H1 (cell line): ENCODE measurements at regions of chr4 and their contacts with region 1.

Region 1: DNA sequence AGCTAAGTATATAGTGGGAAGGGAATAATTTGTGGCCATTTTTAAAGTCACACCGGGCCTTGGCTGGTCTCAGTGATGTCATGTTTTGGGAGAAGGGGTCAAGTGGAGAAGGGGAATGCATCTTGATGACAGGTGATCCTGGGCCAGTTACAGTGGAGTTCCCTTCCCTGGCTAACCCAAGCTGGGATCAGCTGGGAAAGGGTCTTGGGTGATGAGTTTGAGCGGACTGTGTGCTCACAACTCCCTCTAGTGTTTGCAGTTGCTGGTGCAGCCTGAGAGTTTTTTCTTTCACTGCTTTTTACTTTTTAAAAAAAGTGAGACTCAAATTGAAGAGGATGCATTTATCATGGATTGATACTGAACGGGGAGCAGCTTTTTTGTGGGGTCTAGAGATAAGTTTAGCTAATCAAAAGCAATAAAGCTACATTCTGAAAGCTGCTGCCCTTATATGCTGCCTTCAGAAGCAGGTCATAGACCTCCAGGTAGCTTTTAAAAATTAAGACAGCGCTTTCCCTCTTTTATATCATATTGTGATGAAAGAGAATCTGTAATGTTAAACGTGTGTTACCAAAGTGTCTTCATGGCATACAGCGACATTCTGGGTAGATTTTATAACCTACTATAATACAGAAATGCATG is 164.7 kb downstream of the DCLK2 start:
- DNase-seq: no peak
- H3K4me3 ChIP-seq: no peak overlapping the region
- H3K27ac ChIP-seq: no peak overlapping the region
- H3K4me1 ChIP-seq: peaks cover 0 to 2% (median 0%) of the 10 kb centered on the region in 4 experiments; a peak in 1 of 7 replicates
- H3K27me3 ChIP-seq: no peaks in the 10 kb centered on the region
- CTCF ChIP-seq: peak; percentile 73 to 91 (median 83)
- EP300 ChIP-seq: no peak
- POLR2A ChIP-seq: no peak
- RAD21 ChIP-seq: peak; percentile 90

Region 2: DNA sequence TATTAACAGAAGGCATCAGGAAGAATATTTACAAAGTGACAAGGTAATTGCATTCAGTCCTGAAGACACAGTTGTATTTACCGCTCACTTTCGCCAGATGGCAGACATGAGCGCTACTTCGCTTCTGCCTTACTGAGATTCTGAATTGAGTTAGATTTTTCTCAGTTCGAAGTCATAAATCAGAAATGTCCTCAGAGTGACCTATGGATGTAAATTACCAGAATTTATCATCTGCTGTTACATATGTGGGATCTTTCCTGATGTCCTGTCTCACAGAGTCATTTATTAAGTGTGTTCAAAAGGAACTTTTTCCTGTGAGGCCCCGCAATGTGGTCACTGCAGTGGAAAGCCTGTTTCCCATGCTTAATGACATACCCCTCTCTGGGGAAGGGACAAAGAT is 262.0 kb before region 1 on chr4:
- CTCF ChIA-PET with region 1: interaction called, 14 read pairs
- POLR2A ChIA-PET with region 1: no interaction called
- DNase-seq: peak; percentile 13 to 64
- H3K4me3 ChIP-seq: no peak overlapping the region
- H3K27ac ChIP-seq: no peak overlapping the region
- H3K4me1 ChIP-seq: no peaks in the 10 kb centered on the region
- H3K27me3 ChIP-seq: no peaks in the 10 kb centered on the region
- CTCF ChIP-seq: peak; percentile 2 to 82 (median 61)
- EP300 ChIP-seq: no peak
- POLR2A ChIP-seq: no peak
- RAD21 ChIP-seq: peak; percentile 71 to 77

Region 3: DNA sequence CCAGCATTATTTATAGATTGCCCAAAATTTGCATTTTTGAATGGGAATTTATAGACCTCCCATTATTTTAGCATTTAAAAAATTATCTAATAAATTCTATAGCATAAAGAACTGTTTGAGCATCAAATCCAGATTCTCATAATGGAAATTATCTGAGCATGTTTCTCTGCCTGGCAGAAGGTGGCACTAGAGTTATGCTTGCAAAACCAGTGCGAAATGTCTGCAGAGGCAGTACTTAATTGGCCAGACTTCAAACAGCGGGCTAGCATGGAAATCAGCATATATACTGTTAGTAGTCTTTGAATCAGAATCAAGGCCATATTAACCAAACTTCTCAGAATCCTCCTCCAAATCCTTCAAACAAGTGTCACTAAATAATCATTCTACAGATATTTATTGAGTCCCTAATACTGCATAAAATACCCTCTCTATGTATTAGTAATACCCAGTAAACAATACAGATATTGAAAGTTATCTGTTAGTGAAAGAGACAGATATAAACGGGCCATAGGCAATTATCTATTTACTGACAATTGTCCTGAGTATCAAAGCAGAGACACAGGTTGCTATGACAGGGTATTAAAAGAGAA is 243.4 kb before region 1 on chr4:
- CTCF ChIA-PET with region 1: interaction called, 25 read pairs
- POLR2A ChIA-PET with region 1: no interaction called
- DNase-seq: no peak
- H3K4me3 ChIP-seq: no peak overlapping the region
- H3K27ac ChIP-seq: no peak overlapping the region
- H3K4me1 ChIP-seq: no peaks in the 10 kb centered on the region
- H3K27me3 ChIP-seq: no peaks in the 10 kb centered on the region
- CTCF ChIP-seq: peak in 2 of 3 experiments; percentile 71 to 74; a peak in 3 of 4 replicates
- EP300 ChIP-seq: no peak
- POLR2A ChIP-seq: no peak
- RAD21 ChIP-seq: peak; percentile 91

Region 4: DNA sequence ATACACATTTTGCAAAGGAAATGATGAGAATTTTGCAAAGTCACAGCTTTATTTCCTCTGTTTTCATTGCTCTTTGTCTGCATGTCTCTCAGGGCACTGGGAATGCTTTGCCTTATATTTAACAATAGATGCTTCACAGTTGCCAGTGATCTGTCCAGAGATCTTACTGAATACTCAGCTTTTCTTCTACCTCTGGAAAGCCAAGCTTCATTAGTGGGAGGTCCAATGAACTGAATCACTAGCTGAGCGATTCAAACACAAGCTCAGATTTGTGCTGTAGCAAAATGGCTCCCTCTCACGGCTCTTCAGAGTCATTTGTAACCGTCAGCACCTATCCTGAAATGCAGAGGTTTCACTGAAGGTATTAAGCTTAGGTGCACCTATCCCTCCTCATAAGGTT is 25.7 kb before region 1 on chr4:
- CTCF ChIA-PET with region 1: interaction called, 20 read pairs
- POLR2A ChIA-PET with region 1: no interaction called
- DNase-seq: no peak
- H3K4me3 ChIP-seq: no peak overlapping the region
- H3K27ac ChIP-seq: no peak overlapping the region
- H3K4me1 ChIP-seq: peaks cover 0 to 7% (median 0%) of the 10 kb centered on the region in 4 experiments; a peak in 4 of 7 replicates
- H3K27me3 ChIP-seq: no peaks in the 10 kb centered on the region; a peak in 1 of 7 replicates
- CTCF ChIP-seq: peak in 2 of 3 experiments; percentile 25 to 26; a peak in 2 of 4 replicates
- EP300 ChIP-seq: no peak
- POLR2A ChIP-seq: no peak
- RAD21 ChIP-seq: peak; percentile 49 to 57

Region 5: DNA sequence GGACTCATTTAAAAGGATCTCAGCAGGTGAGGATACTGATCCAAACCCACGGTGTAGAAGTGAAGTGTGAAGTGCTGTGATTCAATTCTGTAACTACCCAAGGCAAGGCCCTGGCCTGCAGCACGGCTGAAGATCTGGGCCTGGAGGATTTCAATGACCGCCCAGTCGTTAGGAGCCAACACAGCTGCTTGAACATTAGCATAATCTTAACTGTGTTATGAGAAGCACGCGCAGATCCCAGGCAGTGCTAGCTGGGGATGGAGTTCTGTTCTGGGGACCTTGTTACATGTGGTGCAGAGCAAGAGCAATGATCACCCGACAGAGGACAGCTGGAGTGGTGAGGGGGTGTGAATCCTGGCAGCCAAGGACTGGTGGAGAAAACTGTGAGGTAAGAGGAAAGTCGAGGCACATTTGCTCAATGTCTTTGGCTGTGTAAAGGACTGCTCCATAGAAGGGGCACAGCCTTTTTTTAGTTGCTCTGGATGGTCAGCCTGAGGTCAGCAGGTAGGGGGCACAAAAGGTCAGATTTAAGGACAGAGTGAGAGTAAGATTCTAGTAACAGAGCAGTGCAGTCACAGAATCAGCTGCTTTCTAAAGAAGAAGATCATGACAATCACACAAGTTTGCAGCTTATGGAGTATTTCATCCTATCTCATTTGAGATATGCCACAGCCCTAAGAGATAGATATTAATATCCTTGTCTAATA is 17.1 kb after region 1 on chr4:
- CTCF ChIA-PET with region 1: interaction called, 34 read pairs
- POLR2A ChIA-PET with region 1: interaction called, 3 read pairs
- DNase-seq: no peak
- H3K4me3 ChIP-seq: no peak overlapping the region
- H3K27ac ChIP-seq: no peak overlapping the region
- H3K4me1 ChIP-seq: peaks cover 0 to 10% (median 4%) of the 10 kb centered on the region in 4 experiments; a peak in 6 of 7 replicates
- H3K27me3 ChIP-seq: no peaks in the 10 kb centered on the region
- CTCF ChIP-seq: peak in 2 of 3 experiments; percentile 28 to 47; a peak in 2 of 4 replicates
- EP300 ChIP-seq: no peak
- POLR2A ChIP-seq: no peak
- RAD21 ChIP-seq: peak; percentile 38 to 52

Region 6: GRCh38 chr4:150278206-150278605 is 35.3 kb after region 1 on chr4:
- CTCF ChIA-PET with region 1: no interaction called
- POLR2A ChIA-PET with region 1: no interaction called
- DNase-seq: no peak
- H3K4me3 ChIP-seq: no peak overlapping the region
- H3K27ac ChIP-seq: no peak overlapping the region
- H3K4me1 ChIP-seq: no peaks in the 10 kb centered on the region
- H3K27me3 ChIP-seq: no peaks in the 10 kb centered on the region
- CTCF ChIP-seq: no peak
- EP300 ChIP-seq: no peak
- POLR2A ChIP-seq: no peak
- RAD21 ChIP-seq: no peak

Region 7: GRCh38 chr4:150493851-150494250 is 250.9 kb after region 1 on chr4:
- CTCF ChIA-PET with region 1: no interaction called
- POLR2A ChIA-PET with region 1: no interaction called
- DNase-seq: no peak
- H3K4me3 ChIP-seq: no peak overlapping the region
- H3K27ac ChIP-seq: no peak overlapping the region
- H3K4me1 ChIP-seq: no peaks in the 10 kb centered on the region
- H3K27me3 ChIP-seq: no peaks in the 10 kb centered on the region
- CTCF ChIP-seq: no peak
- EP300 ChIP-seq: no peak
- POLR2A ChIP-seq: no peak
- RAD21 ChIP-seq: no peak